Tibial artery (tissue), 4 donors: ENCODE measurements at regions of chr7 and their contacts with region 1.

Region 1: GRCh38 chr7:148884299-148885022 is 370 bp upstream of the EZH2 start:
- DNase-seq: peak; percentile 87 to 96
- H3K4me3 ChIP-seq: peak overlapping the region; percentile 72 to 99
- H3K27ac ChIP-seq: peak overlapping the region; percentile 81 to 83
- H3K4me1 ChIP-seq: peaks cover 0 to 11% (median 6%) of the 10 kb centered on the region in 4 donors
- H3K27me3 ChIP-seq: no peaks in the 10 kb centered on the region
- CTCF ChIP-seq: peak in 1 of 2 experiments; percentile 8

Region 2: DNA sequence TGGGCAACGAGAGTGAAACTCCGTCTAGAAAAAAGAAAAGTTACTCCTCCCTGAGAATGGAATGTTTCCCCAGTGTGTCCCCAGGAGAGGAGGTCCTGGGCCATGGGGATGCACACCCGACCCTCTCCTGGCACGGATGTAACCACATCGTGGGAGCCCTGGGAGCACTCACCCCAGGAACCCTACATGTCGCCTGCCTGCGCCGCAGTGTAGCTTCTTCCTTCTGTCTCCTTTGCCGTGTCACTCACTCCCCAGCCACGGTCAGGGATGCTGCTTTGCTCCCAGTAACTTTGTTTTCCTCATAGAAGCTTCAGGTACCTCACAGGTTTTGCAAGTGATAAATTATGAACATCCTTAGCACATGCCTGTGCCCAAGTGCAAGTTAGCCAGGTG is 82.4 kb before region 1 on chr7:
- intact Hi-C with region 1: no loop called
- DNase-seq: no peak
- H3K4me3 ChIP-seq: no peak overlapping the region
- H3K27ac ChIP-seq: no peak overlapping the region
- H3K4me1 ChIP-seq: no peaks in the 10 kb centered on the region
- H3K27me3 ChIP-seq: no peaks in the 10 kb centered on the region
- CTCF ChIP-seq: no peak

Region 3: GRCh38 chr7:148819697-148820360 is 64.6 kb before region 1 on chr7:
- intact Hi-C with region 1: no loop called
- DNase-seq: no peak
- H3K4me3 ChIP-seq: no peak overlapping the region
- H3K27ac ChIP-seq: no peak overlapping the region
- H3K4me1 ChIP-seq: peaks cover 0 to 8% (median 0%) of the 10 kb centered on the region in 4 donors
- H3K27me3 ChIP-seq: no peaks in the 10 kb centered on the region
- CTCF ChIP-seq: no peak

Region 4: DNA sequence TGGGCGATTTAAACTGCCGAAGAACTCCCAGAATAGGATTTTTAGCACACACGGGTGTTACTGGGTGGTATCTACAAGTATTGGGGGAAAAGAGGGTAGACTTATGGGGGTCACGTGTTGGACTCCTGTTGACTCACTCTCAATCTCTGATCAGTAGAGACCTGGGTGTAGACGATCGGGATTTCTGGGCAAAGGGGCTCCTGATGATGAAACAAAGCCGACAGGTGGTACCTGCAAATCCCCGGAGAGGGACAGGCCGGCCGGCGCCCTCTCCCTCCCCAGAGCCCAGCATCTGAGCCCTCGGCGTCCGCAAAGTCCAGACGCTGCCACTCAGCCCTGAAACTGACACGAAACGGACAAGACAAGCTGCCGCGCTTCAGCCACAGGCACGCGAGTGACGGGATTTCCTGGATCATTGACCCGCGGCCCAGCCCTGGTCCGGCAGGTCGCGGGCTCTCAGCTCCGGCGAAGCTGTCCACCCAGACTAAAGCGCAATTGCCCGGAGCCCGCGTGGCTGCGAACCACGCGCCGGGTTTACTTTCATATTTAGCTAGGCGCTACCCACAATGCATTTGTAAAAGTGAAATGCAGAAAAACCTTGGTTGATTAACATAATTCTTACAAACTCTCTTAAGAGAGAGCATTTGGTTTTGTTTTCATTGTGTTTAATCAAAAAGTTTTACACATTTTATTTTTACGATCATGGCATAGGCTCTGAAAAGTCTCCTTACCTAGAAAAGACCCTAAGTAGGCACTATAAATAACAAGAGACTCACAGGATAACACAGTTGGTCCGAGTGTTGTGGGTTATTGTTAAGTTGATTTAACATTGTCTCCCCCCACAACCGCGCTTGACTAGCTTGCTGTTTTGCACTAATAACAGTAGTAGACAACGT is 56.5 kb after region 1 on chr7:
- intact Hi-C with region 1: loop called (anchors 2 kb)
- DNase-seq: peak; percentile 80 to 88
- H3K4me3 ChIP-seq: peak overlapping the region; percentile 72 to 76
- H3K27ac ChIP-seq: peak overlapping the region; percentile 84 to 87
- H3K4me1 ChIP-seq: peaks cover 0 to 8% (median 5%) of the 10 kb centered on the region in 4 donors
- H3K27me3 ChIP-seq: no peaks in the 10 kb centered on the region
- CTCF ChIP-seq: no peak